Activated CD4-positive, alpha-beta T cell treated with anti-CD3 and anti-CD28 coated beads for 36 hours (primary cell): ENCODE measurements at regions of chr9 and their contacts with region 1.

Region 1: DNA sequence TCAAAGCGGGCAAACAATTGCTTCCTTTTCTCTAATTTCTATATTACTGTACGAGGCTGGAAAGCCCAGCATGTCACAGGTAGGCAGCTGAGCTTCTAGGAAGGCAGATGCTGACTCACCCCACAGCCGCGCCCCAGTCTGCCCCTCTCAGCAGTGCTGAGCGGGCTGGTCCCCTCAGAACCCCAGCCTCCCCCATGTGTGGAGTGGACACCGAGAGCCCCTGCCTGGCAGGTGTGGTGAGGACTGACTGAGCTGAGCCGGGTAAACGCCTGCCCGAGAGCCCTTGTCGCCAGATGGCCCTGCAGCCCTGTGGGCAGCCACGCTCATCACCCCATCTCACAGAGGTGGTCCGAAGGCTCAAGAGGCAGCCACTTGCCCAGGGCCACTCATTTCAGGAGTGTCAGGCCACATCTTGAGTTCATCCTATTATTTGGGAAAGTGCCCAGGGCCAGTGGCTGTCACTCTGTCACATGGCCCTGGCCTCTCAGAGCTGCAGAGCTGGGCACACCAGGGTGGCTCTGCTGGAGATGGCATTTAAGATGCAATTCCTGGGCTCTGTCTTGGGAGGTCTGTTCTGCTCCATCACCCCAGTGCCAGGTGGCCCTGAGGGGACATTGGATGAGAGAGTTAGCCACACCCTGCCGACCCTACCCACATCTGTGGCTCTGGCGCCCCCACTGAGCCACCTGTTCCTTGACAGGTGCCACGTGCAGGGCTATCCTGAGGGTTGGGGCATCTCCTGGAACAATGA is 12.4 kb downstream of the CARD19 start:
- DNase-seq: peak; percentile 81
- ATAC-seq: peak; percentile 92
- H3K4me3 Mint-ChIP-seq: no peak overlapping the region
- H3K27ac Mint-ChIP-seq: peak overlapping the region; percentile 80
- H3K4me1 Mint-ChIP-seq: peaks cover 49% of the 10 kb centered on the region
- H3K27me3 Mint-ChIP-seq: no peaks in the 10 kb centered on the region

Region 2: DNA sequence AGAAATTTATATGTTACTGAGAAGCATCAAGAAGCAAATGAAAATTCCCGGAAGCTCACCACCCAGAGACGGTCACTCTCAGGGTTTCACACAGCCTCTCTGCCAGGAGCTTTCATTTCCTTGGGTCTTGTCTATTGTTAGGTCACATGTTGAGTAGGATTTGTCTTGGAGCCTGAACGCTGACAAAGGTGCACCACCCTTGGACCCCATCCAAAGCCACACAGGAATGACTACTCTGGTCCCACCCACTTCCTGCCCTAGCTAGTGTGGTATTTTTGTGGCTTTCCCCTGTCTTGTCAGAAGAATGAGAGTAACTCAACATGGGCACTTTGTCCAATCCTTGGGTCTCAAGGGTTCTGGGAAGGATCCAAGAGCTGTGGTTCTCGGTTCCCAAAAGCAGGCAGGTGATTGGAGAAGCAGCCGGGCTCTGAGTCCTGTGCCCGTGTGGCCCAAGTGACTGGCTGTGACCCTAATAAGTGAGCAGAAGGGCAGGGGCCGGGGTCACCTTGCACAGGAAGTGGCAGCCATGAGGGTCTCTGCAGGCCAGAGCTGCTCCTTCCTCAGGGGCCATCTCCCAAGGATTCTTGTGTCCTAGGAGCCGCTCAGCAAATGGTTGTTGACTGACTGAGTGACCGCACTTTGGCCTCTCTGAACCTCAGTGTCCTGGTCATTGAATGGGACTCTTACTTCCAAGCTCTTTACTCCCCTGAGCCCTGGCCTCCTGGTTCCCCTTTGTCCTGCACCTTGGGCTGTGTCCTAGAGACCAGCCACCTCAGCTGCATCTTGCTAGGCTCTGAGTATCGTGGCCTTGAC is 154.2 kb before region 1 on chr9:
- CTCF ChIA-PET with region 1: interaction called, 13 read pairs
- POLR2A ChIA-PET with region 1: no interaction called
- intact Hi-C with region 1: no loop called
- DNase-seq: peak; percentile 89
- ATAC-seq: peak; percentile 85
- H3K4me3 Mint-ChIP-seq: peak overlapping the region; percentile 66
- H3K27ac Mint-ChIP-seq: peak overlapping the region; percentile 97
- H3K4me1 Mint-ChIP-seq: peaks cover 78% of the 10 kb centered on the region
- H3K27me3 Mint-ChIP-seq: no peaks in the 10 kb centered on the region

Region 3: DNA sequence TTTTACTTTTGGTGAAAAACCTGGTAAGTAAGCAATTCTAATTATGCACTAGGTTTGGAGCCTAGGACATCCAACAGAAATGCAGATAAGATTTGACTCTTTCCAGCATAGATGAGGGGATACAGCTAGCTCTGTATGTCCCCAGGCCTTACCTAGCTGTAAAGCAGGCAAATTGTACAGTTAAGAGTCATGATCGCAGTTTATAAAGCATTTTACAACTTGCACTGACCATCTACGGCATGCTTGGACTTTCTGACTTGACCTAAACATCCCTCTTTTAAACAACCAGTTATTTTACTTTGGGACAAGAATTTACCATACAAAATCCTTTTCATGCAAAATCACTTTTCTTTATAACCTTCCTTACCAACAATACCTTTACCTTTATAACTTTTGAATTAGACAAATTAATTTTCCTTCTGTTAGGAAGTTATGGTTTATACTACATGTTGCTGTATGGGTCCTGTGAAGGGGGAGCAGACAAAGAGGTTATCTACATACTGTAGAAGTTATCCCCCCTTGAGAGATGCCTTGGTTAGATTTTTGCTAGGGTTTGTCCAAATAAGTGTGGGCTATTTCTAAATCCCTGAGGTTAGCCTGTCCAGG is 124.4 kb before region 1 on chr9:
- CTCF ChIA-PET with region 1: no interaction called
- POLR2A ChIA-PET with region 1: no interaction called
- intact Hi-C with region 1: no loop called
- DNase-seq: peak; percentile 66
- ATAC-seq: no peak
- H3K4me3 Mint-ChIP-seq: no peak overlapping the region
- H3K27ac Mint-ChIP-seq: no peak overlapping the region
- H3K4me1 Mint-ChIP-seq: peaks cover 73% of the 10 kb centered on the region
- H3K27me3 Mint-ChIP-seq: no peaks in the 10 kb centered on the region

Region 4: DNA sequence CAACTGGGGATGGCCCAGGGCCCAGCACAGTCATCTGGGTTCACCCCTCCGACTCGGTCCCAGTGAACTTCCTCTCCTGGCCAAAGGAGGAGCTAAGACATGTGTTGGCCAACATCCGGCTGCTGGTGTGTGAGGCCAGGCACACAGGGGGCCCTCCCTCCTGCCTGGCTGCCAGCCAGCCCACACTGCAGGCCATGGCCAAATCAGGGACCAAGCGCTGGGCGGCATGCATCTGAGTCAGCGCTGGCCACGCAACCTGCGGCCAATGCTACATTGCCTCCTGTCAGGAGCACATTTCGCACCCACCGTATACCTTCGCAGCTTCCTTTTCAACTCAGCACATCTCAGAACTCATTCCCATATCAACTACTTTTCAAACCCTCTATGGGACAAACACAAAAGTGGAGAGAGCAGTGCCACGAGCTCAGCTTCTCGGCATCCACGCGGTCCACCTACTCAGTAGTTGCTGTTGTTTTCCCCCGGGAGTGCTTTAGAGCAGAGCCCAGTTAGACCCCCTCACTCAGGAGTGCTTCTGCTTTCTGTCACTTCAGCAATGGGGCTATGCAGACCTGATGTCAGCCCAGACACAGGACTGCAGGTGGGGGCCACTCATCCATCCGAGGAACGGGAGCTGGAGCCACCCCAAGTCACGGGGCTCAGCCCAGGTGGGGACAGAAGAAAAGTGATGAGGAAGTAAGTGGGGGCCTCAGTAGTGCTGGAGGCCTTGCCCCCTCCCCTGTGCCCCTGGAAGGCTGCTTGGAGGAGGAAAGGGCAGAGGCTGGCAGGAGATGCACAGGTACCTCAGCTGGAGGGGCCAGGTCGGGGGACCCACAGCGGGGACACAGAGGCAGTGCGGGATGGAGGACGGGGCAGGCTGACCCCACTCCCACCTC is 11.7 kb after region 1 on chr9:
- CTCF ChIA-PET with region 1: interaction called, 18 read pairs
- POLR2A ChIA-PET with region 1: no interaction called
- intact Hi-C with region 1: no loop called
- DNase-seq: peak; percentile 65
- ATAC-seq: peak; percentile 87
- H3K4me3 Mint-ChIP-seq: no peak overlapping the region
- H3K27ac Mint-ChIP-seq: peak overlapping the region; percentile 73
- H3K4me1 Mint-ChIP-seq: peaks cover 18% of the 10 kb centered on the region
- H3K27me3 Mint-ChIP-seq: no peaks in the 10 kb centered on the region

Region 5: GRCh38 chr9:93143830-93144530 is 35.5 kb after region 1 on chr9:
- CTCF ChIA-PET with region 1: interaction called, 11 read pairs
- POLR2A ChIA-PET with region 1: no interaction called
- intact Hi-C with region 1: no loop called
- DNase-seq: peak; percentile 60
- ATAC-seq: peak; percentile 57
- H3K4me3 Mint-ChIP-seq: no peak overlapping the region
- H3K27ac Mint-ChIP-seq: peak overlapping the region; percentile 91
- H3K4me1 Mint-ChIP-seq: peaks cover 64% of the 10 kb centered on the region
- H3K27me3 Mint-ChIP-seq: no peaks in the 10 kb centered on the region

Region 6: GRCh38 chr9:93159601-93160471 is 51.4 kb after region 1 on chr9:
- CTCF ChIA-PET with region 1: interaction called, 4 read pairs
- POLR2A ChIA-PET with region 1: no interaction called
- intact Hi-C with region 1: loop called (anchors 2 to 5 kb)
- DNase-seq: peak; percentile 86
- ATAC-seq: peak; percentile 68
- H3K4me3 Mint-ChIP-seq: no peak overlapping the region
- H3K27ac Mint-ChIP-seq: no peak overlapping the region
- H3K4me1 Mint-ChIP-seq: peaks cover 26% of the 10 kb centered on the region
- H3K27me3 Mint-ChIP-seq: no peaks in the 10 kb centered on the region

Region 7: GRCh38 chr9:93276968-93277367 is 168.5 kb after region 1 on chr9:
- CTCF ChIA-PET with region 1: no interaction called
- POLR2A ChIA-PET with region 1: no interaction called
- intact Hi-C with region 1: no loop called
- DNase-seq: no peak
- ATAC-seq: no peak
- H3K4me3 Mint-ChIP-seq: no peak overlapping the region
- H3K27ac Mint-ChIP-seq: no peak overlapping the region
- H3K4me1 Mint-ChIP-seq: no peaks in the 10 kb centered on the region
- H3K27me3 Mint-ChIP-seq: peaks cover 6% of the 10 kb centered on the region

Region 8: GRCh38 chr9:93302551-93303257 is 194.2 kb after region 1 on chr9:
- CTCF ChIA-PET with region 1: interaction called, 8 read pairs
- POLR2A ChIA-PET with region 1: no interaction called
- intact Hi-C with region 1: loop called (anchors 1 kb)
- DNase-seq: peak; percentile 78
- ATAC-seq: peak; percentile 88
- H3K4me3 Mint-ChIP-seq: no peak overlapping the region
- H3K27ac Mint-ChIP-seq: no peak overlapping the region
- H3K4me1 Mint-ChIP-seq: no peaks in the 10 kb centered on the region
- H3K27me3 Mint-ChIP-seq: no peaks in the 10 kb centered on the region